ENCODE measurements at regions of chr9 and their contacts with region 1.

Region 1: DNA sequence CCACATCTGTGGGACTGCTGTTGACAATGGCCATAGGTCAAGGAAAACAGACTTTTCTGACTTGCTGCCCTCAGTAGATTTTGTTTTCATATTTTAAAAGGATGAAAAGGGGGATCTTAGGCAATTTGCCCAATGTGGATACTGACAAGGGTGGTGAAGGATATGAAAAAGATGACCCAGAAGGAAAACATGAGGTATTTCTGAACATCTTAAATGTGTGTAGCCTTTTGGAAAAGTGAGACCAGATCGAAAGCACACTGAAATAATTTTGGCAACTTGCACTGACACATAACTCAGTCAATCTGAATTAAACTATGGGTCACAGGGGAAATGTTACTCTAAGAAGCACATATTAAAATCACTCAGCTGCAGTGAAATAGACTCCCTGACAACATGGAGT is 1793.0 kb upstream of the ACO1 start:
- DNase-seq: no peak
- ATAC-seq: no peak
- H3K4me3 ChIP-seq: no peak overlapping the region
- H3K4me3 Mint-ChIP-seq: no peak overlapping the region
- H3K27ac ChIP-seq: no peak overlapping the region
- H3K27ac Mint-ChIP-seq: no peak overlapping the region
- H3K4me1 ChIP-seq: no peaks in the 10 kb centered on the region
- H3K4me1 Mint-ChIP-seq: no peaks in the 10 kb centered on the region
- H3K27me3 ChIP-seq: no peaks in the 10 kb centered on the region
- H3K27me3 Mint-ChIP-seq: no peaks in the 10 kb centered on the region
- CTCF ChIP-seq: no peak

Region 2: DNA sequence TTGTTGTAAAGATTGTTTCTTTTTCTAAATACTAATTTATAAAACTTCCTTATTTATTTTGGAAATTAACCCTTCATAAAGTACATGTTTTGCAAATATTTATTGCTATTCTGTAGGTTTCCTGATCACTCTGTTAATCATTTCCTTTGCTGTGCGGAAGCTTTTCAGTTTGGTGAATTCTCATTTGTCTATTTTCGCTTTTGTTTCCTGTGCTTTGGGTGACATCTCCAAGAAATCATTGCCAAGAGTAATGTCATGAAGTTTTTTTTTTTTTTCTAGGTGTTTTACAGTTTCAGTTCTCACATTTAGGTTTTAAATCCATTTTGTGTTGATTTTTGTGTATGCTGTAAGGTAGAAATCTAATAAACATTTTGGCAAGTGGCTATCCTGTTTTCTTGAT is 106.8 kb before region 1 on chr9:
- CTCF ChIA-PET with region 1: no interaction called
- POLR2A ChIA-PET with region 1: no interaction called
- intact Hi-C with region 1: no loop called
- DNase-seq: no peak
- ATAC-seq: no peak
- H3K4me3 ChIP-seq: no peak overlapping the region
- H3K4me3 Mint-ChIP-seq: no peak overlapping the region
- H3K27ac ChIP-seq: no peak overlapping the region
- H3K27ac Mint-ChIP-seq: no peak overlapping the region
- H3K4me1 ChIP-seq: no peaks in the 10 kb centered on the region
- H3K4me1 Mint-ChIP-seq: no peaks in the 10 kb centered on the region
- H3K27me3 ChIP-seq: no peaks in the 10 kb centered on the region
- H3K27me3 Mint-ChIP-seq: no peaks in the 10 kb centered on the region
- CTCF ChIP-seq: no peak

Region 3: GRCh38 chr9:30605936-30606335 is 14.5 kb after region 1 on chr9:
- CTCF ChIA-PET with region 1: no interaction called
- POLR2A ChIA-PET with region 1: no interaction called
- intact Hi-C with region 1: no loop called
- DNase-seq: no peak
- ATAC-seq: no peak
- H3K4me3 ChIP-seq: no peak overlapping the region
- H3K4me3 Mint-ChIP-seq: no peak overlapping the region
- H3K27ac ChIP-seq: no peak overlapping the region
- H3K27ac Mint-ChIP-seq: no peak overlapping the region
- H3K4me1 ChIP-seq: no peaks in the 10 kb centered on the region
- H3K4me1 Mint-ChIP-seq: no peaks in the 10 kb centered on the region
- H3K27me3 ChIP-seq: no peaks in the 10 kb centered on the region
- H3K27me3 Mint-ChIP-seq: no peaks in the 10 kb centered on the region
- CTCF ChIP-seq: no peak

Region 4: DNA sequence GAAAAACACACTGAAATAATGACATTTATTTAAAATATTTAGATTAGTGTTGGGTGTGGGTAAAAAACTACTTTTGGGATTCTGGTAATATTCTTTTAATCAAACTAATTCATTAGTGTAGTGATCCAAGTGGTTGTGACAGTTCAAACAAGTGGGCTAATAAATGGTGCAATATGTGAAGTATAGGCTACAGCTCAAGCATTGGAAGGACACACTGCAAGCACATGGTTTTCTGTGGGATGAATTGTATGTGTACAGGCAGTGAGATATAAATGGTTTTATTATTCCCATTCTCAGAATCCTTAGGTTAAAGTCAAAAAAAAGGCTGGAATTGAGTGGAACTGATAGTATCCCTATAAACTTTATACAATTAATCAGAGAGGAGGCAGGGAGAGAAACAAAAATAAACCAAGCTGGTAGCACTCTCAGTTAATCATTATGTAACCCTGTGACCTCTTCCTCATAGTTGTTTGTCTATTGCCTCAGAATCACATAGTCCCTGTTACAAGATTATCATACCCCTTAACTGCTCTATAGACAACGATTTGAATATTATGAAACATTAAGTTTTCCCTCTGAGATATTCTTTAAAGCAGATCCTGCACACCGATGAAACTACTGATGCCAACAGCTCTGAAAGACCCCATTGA is 37.6 kb after region 1 on chr9:
- CTCF ChIA-PET with region 1: no interaction called
- POLR2A ChIA-PET with region 1: no interaction called
- intact Hi-C with region 1: no loop called
- DNase-seq: no peak
- ATAC-seq: no peak
- H3K4me3 ChIP-seq: no peak overlapping the region
- H3K4me3 Mint-ChIP-seq: no peak overlapping the region
- H3K27ac ChIP-seq: no peak overlapping the region
- H3K27ac Mint-ChIP-seq: no peak overlapping the region
- H3K4me1 ChIP-seq: no peaks in the 10 kb centered on the region
- H3K4me1 Mint-ChIP-seq: no peaks in the 10 kb centered on the region
- H3K27me3 ChIP-seq: no peaks in the 10 kb centered on the region
- H3K27me3 Mint-ChIP-seq: no peaks in the 10 kb centered on the region
- CTCF ChIP-seq: no peak

Region 5: DNA sequence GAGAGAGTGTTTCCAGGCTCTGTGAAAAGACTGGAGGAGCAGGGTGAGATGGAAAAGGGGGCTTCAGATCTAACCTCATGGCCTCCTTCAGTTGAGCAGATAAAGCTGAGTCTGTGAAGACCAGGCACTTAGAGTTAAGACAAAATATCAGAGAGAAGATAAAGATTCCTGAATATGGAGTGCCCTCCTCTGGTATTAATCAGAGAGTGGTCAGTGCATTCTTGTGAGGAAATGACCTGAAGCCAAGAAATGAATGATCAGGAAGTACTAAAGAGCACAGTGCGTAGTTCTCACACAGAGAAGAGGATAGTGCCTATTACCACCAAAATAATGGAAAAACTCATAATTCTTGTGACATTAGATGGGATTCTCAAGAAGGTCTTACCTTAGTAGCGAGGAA is 376.0 kb after region 1 on chr9:
- CTCF ChIA-PET with region 1: no interaction called
- POLR2A ChIA-PET with region 1: no interaction called
- intact Hi-C with region 1: no loop called
- DNase-seq: no peak
- ATAC-seq: no peak
- H3K4me3 ChIP-seq: no peak overlapping the region
- H3K4me3 Mint-ChIP-seq: no peak overlapping the region
- H3K27ac ChIP-seq: no peak overlapping the region
- H3K27ac Mint-ChIP-seq: no peak overlapping the region
- H3K4me1 ChIP-seq: no peaks in the 10 kb centered on the region
- H3K4me1 Mint-ChIP-seq: no peaks in the 10 kb centered on the region
- H3K27me3 ChIP-seq: no peaks in the 10 kb centered on the region
- H3K27me3 Mint-ChIP-seq: no peaks in the 10 kb centered on the region
- CTCF ChIP-seq: no peak

Region 6: GRCh38 chr9:32161720-32162119 is 1570.3 kb after region 1 on chr9:
- CTCF ChIA-PET with region 1: no interaction called
- POLR2A ChIA-PET with region 1: no interaction called
- intact Hi-C with region 1: loop called (anchors 5 kb)
- DNase-seq: no peak
- ATAC-seq: no peak
- H3K4me3 ChIP-seq: no peak overlapping the region
- H3K4me3 Mint-ChIP-seq: no peak overlapping the region
- H3K27ac ChIP-seq: no peak overlapping the region
- H3K27ac Mint-ChIP-seq: no peak overlapping the region
- H3K4me1 ChIP-seq: no peaks in the 10 kb centered on the region
- H3K4me1 Mint-ChIP-seq: no peaks in the 10 kb centered on the region
- H3K27me3 ChIP-seq: no peaks in the 10 kb centered on the region
- H3K27me3 Mint-ChIP-seq: no peaks in the 10 kb centered on the region
- CTCF ChIP-seq: no peak

Measured in B cell (primary cell).